SK-N-SH (cell line): ENCODE measurements at regions of chr5 and their contacts with region 1.

Region 1: DNA sequence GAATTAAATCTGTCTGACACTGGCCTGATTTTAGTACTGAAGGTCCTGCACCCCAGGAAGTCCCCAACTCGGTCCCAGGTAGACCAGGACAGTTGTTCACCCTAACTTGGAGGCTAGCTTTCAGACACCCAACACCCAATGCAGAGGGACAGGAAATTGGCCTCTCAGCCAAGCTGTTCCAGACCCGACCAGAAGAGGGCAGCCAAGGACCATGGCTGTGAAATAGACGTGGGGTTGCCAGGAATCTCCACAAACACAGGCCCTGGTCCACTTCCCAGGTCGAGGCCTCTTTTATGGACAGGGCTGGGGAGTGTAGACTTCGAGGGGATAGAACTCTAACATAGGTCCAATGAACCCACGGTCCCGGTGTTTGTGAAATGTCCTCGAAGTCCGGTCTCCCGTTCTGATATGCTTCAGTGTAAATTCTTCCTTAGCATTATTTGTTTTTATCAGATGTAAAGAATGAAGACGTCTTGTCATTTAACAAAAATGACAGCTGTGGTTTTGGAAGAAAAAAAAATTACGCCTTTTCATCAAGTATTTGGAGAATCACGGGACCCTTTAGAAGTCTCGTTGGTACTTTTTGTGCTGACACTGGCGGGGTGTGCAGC is 260.3 kb upstream of the ADAMTS16 start:
- DNase-seq: peak; percentile 87
- H3K4me3 ChIP-seq: no peak overlapping the region; a peak in 1 of 4 replicates
- H3K27ac ChIP-seq: no peak overlapping the region
- H3K4me1 ChIP-seq: no peaks in the 10 kb centered on the region; a peak in 1 of 4 replicates
- H3K27me3 ChIP-seq: no peaks in the 10 kb centered on the region
- CTCF ChIP-seq: peak; percentile 95
- EP300 ChIP-seq: no peak
- RAD21 ChIP-seq: peak; percentile 96

Region 2: GRCh38 chr5:4868109-4868735 is 11.6 kb before region 1 on chr5:
- CTCF ChIA-PET with region 1: interaction called, 16 read pairs
- POLR2A ChIA-PET with region 1: no interaction called
- DNase-seq: peak; percentile 85
- H3K4me3 ChIP-seq: peak overlapping the region in 1 of 2 experiments; percentile 18; a peak in 1 of 4 replicates
- H3K27ac ChIP-seq: no peak overlapping the region
- H3K4me1 ChIP-seq: no peaks in the 10 kb centered on the region
- H3K27me3 ChIP-seq: peaks cover 11% of the 10 kb centered on the region; the same call in 1 of the 2 replicates
- CTCF ChIP-seq: peak; percentile 90
- EP300 ChIP-seq: no peak
- RAD21 ChIP-seq: peak; percentile 66

Region 3: GRCh38 chr5:4941957-4942830 is 62.4 kb after region 1 on chr5:
- CTCF ChIA-PET with region 1: interaction called, 71 read pairs
- POLR2A ChIA-PET with region 1: no interaction called
- DNase-seq: peak; percentile 87
- H3K4me3 ChIP-seq: peak overlapping the region in 1 of 2 experiments; percentile 23; a peak in 1 of 4 replicates
- H3K27ac ChIP-seq: no peak overlapping the region
- H3K4me1 ChIP-seq: peaks cover 0 to 7% of the 10 kb centered on the region in 2 experiments; a peak in 1 of 4 replicates
- H3K27me3 ChIP-seq: no peaks in the 10 kb centered on the region; the same call in 1 of the 2 replicates
- CTCF ChIP-seq: peak; percentile 91
- EP300 ChIP-seq: no peak
- RAD21 ChIP-seq: peak; percentile 61

Region 4: DNA sequence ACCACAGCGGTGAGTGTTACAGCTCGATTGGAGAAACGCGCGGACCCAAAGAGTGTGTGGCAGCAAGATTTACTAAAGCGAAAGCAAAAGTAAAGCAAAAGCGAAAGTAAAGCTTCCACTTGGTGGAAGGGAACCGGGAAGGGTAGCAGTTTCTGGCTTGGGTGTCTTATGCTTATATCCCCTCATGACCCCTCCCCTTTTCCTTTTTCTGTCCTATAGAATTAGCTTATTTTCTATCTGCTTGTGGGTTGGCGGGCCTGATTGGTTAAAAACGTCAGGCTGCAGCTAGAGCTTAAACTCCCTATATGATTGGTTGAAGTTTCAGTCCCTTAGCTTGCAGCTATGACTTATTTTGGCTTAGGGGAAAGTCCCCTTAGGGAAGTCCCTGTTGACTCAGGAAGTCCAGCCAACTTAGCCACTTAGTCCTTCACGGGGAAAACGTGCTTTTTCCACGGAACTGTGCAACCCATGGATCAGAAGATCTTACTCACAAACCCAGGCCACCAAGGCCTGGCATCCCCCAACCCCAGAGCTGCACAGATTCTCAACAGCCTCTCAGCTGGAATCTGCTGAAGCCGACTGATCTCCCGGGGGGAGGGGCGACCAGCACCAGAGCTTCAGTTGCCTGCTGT is 146.1 kb after region 1 on chr5:
- CTCF ChIA-PET with region 1: interaction called, 11 read pairs
- POLR2A ChIA-PET with region 1: no interaction called
- DNase-seq: peak; percentile 51
- H3K4me3 ChIP-seq: peak overlapping the region; percentile 68 to 89
- H3K27ac ChIP-seq: peak overlapping the region; percentile 56 to 73
- H3K4me1 ChIP-seq: peaks cover 0 to 8% of the 10 kb centered on the region in 2 experiments; a peak in 1 of 4 replicates
- H3K27me3 ChIP-seq: no peaks in the 10 kb centered on the region
- CTCF ChIP-seq: no peak
- EP300 ChIP-seq: no peak
- RAD21 ChIP-seq: no peak

Region 5: GRCh38 chr5:5135957-5136676 is 256.3 kb after region 1 on chr5:
- CTCF ChIA-PET with region 1: interaction called, 24 read pairs
- POLR2A ChIA-PET with region 1: no interaction called
- DNase-seq: no peak
- H3K4me3 ChIP-seq: no peak overlapping the region
- H3K27ac ChIP-seq: no peak overlapping the region
- H3K4me1 ChIP-seq: peaks cover 0 to 3% of the 10 kb centered on the region in 2 experiments; a peak in 1 of 4 replicates
- H3K27me3 ChIP-seq: peaks cover 23% of the 10 kb centered on the region
- CTCF ChIP-seq: no peak
- EP300 ChIP-seq: no peak
- RAD21 ChIP-seq: no peak

Region 6: DNA sequence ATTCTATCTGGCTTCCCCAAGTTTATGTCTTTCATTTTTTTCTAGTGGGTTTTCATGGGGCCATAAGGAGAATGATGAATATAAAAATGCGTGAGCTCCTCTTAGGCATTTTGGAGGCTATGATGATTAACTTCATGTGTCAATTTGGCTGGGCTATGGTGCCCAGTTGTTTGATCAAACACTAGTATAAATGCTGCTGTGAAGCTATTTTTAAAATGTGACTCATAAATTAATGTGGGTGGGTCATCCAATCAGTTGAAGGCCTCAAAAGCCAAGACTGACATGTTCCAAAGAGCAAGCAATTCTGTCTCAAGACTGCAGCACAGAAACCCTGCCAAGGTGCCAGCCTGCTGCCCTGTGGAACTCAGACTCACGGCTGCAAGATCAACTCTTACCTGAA is 518.2 kb after region 1 on chr5:
- CTCF ChIA-PET with region 1: interaction called, 13 read pairs
- POLR2A ChIA-PET with region 1: interaction called, 5 read pairs
- DNase-seq: no peak
- H3K4me3 ChIP-seq: no peak overlapping the region
- H3K27ac ChIP-seq: no peak overlapping the region
- H3K4me1 ChIP-seq: no peaks in the 10 kb centered on the region
- H3K27me3 ChIP-seq: no peaks in the 10 kb centered on the region
- CTCF ChIP-seq: no peak
- EP300 ChIP-seq: no peak
- RAD21 ChIP-seq: no peak